ENCODE measurements at regions of chr15 and their contacts with region 1.

Region 1: DNA sequence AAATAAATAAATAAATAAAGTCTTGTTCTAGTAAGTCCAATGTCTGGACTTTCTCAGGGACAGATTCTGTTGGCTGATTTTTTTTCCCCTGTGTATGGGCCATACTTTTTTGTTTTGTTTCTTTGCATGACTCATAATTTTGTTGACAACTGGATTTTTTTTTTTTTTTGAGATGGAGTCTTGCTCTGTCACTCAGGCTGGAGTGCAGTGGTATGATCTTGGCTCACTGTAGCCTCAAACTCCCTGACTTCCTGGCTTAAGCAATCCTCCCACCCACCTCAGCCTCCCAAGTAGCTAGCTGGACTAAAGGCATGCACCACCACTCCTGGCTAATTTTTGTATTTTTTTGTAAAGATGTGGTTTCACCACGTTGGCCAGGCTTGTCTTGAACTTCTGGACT is 38.9 kb downstream of the TICRR start:
- DNase-seq: no peak
- H3K4me3 ChIP-seq: no peak overlapping the region
- H3K27ac ChIP-seq: no peak overlapping the region
- H3K4me1 ChIP-seq: no peaks in the 10 kb centered on the region
- H3K27me3 ChIP-seq: no peaks in the 10 kb centered on the region
- CTCF ChIP-seq: no peak

Region 2: GRCh38 chr15:89599021-89599420 is 15.1 kb before region 1 on chr15:
- CTCF ChIA-PET with region 1: no interaction called
- POLR2A ChIA-PET with region 1: interaction called, 14 read pairs
- intact Hi-C with region 1: no loop called
- DNase-seq: no peak
- H3K4me3 ChIP-seq: no peak overlapping the region
- H3K27ac ChIP-seq: no peak overlapping the region
- H3K4me1 ChIP-seq: no peaks in the 10 kb centered on the region
- H3K27me3 ChIP-seq: no peaks in the 10 kb centered on the region
- CTCF ChIP-seq: no peak

Measured in A673 (cell line).